IMR-90 (cell line): ENCODE measurements at regions of chr21 and their contacts with region 1.

Region 1: GRCh38 chr21:46048926-46049889 is 48.7 kb upstream of the COL6A2 start:
- DNase-seq: peak; percentile 100
- ATAC-seq: peak; percentile 91
- H3K4me3 ChIP-seq: no peak overlapping the region
- H3K27ac ChIP-seq: peak overlapping the region; percentile 96
- H3K4me1 ChIP-seq: peaks cover 24% of the 10 kb centered on the region
- H3K27me3 ChIP-seq: no peaks in the 10 kb centered on the region
- CTCF ChIP-seq: no peak
- POLR2A ChIP-seq: no peak; the same call in 1 of the 2 replicates
- RAD21 ChIP-seq: peak; percentile 39

Region 2: DNA sequence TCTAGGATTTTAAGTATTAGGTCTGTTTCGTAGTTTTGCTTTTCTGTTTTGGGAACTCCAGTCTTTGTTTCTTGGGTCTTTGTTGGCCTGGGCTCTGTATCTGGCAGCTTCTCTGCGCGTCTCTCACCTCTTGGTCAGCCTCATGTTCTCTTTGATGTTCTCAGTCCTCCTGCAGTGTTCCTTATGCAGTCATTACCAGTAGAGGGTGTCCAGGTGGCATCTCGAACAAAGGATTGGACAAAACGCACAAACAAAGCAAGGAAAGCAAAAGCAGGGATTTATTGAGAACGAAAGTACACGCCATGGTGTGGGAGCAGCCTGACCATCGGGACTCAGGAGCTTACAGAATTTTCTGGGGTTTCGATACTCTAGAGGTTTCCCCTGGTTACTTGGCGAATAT is 201.3 kb before region 1 on chr21:
- CTCF ChIA-PET with region 1: no interaction called
- POLR2A ChIA-PET with region 1: no interaction called
- dilution Hi-C with region 1: no loop called
- in situ Hi-C with region 1: no loop called
- intact Hi-C with region 1: no loop called
- DNase-seq: no peak
- ATAC-seq: no peak
- H3K4me3 ChIP-seq: no peak overlapping the region
- H3K27ac ChIP-seq: no peak overlapping the region
- H3K4me1 ChIP-seq: peaks cover 3% of the 10 kb centered on the region
- H3K27me3 ChIP-seq: no peaks in the 10 kb centered on the region
- CTCF ChIP-seq: no peak
- POLR2A ChIP-seq: no peak
- RAD21 ChIP-seq: no peak

Region 3: GRCh38 chr21:46028573-46029091 is 20.6 kb before region 1 on chr21:
- CTCF ChIA-PET with region 1: no interaction called
- POLR2A ChIA-PET with region 1: no interaction called
- dilution Hi-C with region 1: no loop called
- in situ Hi-C with region 1: no loop called
- intact Hi-C with region 1: loop called (anchors 2 kb)
- DNase-seq: peak; percentile 84
- ATAC-seq: peak; percentile 66
- H3K4me3 ChIP-seq: no peak overlapping the region
- H3K27ac ChIP-seq: peak overlapping the region; percentile 96
- H3K4me1 ChIP-seq: peaks cover 17% of the 10 kb centered on the region
- H3K27me3 ChIP-seq: no peaks in the 10 kb centered on the region
- CTCF ChIP-seq: no peak
- POLR2A ChIP-seq: no peak
- RAD21 ChIP-seq: no peak

Region 4: GRCh38 chr21:46035809-46036695 is 13.2 kb before region 1 on chr21:
- CTCF ChIA-PET with region 1: no interaction called
- POLR2A ChIA-PET with region 1: no interaction called
- dilution Hi-C with region 1: no loop called
- in situ Hi-C with region 1: no loop called
- intact Hi-C with region 1: loop called (anchors 1 kb)
- DNase-seq: peak; percentile 95
- ATAC-seq: peak; percentile 87
- H3K4me3 ChIP-seq: no peak overlapping the region
- H3K27ac ChIP-seq: peak overlapping the region; percentile 82
- H3K4me1 ChIP-seq: peaks cover 30% of the 10 kb centered on the region
- H3K27me3 ChIP-seq: no peaks in the 10 kb centered on the region
- CTCF ChIP-seq: no peak
- POLR2A ChIP-seq: peak; percentile 38; the same call in 1 of the 2 replicates
- RAD21 ChIP-seq: peak; percentile 20; the same call in 1 of the 2 replicates

Region 5: DNA sequence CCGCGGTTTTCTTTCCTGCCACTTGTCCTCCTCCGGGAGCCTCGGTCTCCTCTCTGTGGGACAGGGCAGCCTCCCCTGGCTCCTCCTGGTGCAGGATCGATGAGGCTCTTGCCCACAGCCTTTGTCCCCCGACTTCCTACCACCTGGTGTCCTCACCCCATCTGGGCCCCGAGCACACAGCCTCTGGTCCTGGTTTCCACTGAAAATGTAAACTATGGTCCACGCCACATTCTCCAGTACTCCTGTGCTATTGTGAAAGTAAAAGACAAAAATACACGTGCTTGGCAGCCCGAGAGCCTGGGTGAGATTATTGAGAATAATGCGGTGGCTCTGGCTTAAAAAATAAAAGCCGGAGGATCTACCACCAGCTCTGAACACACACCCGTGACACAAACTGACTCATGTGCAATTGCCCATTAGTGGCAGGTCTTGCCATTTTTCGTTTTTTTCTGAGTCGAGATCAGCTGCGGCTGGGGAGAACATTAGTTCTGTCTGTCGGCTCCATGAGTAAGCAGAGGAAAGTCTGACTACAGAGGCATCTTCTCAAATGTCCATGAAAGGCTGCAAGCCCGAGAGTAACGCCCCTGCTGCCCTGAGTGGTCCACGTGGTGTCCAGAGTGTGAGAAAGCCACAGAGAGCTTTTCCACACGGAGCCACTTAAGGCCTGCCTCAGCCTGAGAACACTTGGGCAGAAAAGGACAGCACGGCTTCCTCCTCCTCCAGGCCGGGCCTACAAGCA is 43.0 kb after region 1 on chr21:
- CTCF ChIA-PET with region 1: no interaction called
- POLR2A ChIA-PET with region 1: no interaction called
- dilution Hi-C with region 1: no loop called
- in situ Hi-C with region 1: no loop called
- intact Hi-C with region 1: loop called (anchors 1 kb)
- DNase-seq: peak; percentile 99
- ATAC-seq: peak; percentile 86
- H3K4me3 ChIP-seq: peak overlapping the region; percentile 28
- H3K27ac ChIP-seq: peak overlapping the region; percentile 92
- H3K4me1 ChIP-seq: peaks cover 24% of the 10 kb centered on the region
- H3K27me3 ChIP-seq: no peaks in the 10 kb centered on the region
- CTCF ChIP-seq: 0 out of 2 replicates have a peak, but pooled peaks have one; percentile 0
- POLR2A ChIP-seq: peak; percentile 76
- RAD21 ChIP-seq: peak; percentile 22; the same call in 1 of the 2 replicates